Activated naive CD8-positive, alpha-beta T cell treated with anti-CD3 and anti-CD28 coated beads, Interleukin-2, amount 10 ng/mL, durations not matched to agents 7 days and 5 days (primary cell): ENCODE measurements at regions of chr14 and their contacts with region 1.

Region 1: GRCh38 chr14:63863004-63863403 is 10.2 kb downstream of the SYNE2 start:
- DNase-seq: no peak
- ATAC-seq: no peak
- H3K4me3 Mint-ChIP-seq: peak overlapping the region; percentile 58
- H3K27ac Mint-ChIP-seq: peak overlapping the region; percentile 69
- H3K4me1 Mint-ChIP-seq: peaks cover 57% of the 10 kb centered on the region
- H3K27me3 Mint-ChIP-seq: no peaks in the 10 kb centered on the region

Region 2: DNA sequence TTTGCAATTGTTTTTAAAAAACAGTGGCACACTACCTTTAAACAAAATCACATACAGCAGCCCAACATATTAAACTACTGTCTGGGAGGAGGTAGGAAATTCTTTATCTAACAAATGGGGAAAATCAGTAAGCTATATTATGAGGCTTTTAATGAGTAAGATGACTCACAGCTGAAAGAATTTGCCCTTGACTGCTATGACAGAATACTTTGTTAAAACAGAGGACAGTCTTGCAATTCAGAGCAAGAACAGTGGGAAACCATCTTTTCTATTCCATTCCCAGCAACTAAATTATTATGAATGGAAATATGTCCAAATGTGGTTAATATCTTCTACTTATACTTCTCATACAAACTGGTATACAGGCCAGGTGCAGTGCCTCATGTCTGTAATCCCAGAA is 86.0 kb before region 1 on chr14:
- POLR2A ChIA-PET with region 1: no interaction called
- DNase-seq: no peak
- ATAC-seq: no peak
- H3K4me3 Mint-ChIP-seq: no peak overlapping the region
- H3K27ac Mint-ChIP-seq: no peak overlapping the region
- H3K4me1 Mint-ChIP-seq: peaks cover 2% of the 10 kb centered on the region
- H3K27me3 Mint-ChIP-seq: peaks cover 2% of the 10 kb centered on the region

Region 3: GRCh38 chr14:63840981-63841380 is 22.0 kb before region 1 on chr14:
- POLR2A ChIA-PET with region 1: no interaction called
- DNase-seq: peak; percentile 60
- ATAC-seq: peak; percentile 52
- H3K4me3 Mint-ChIP-seq: no peak overlapping the region
- H3K27ac Mint-ChIP-seq: no peak overlapping the region
- H3K4me1 Mint-ChIP-seq: peaks cover 6% of the 10 kb centered on the region
- H3K27me3 Mint-ChIP-seq: peaks cover 3% of the 10 kb centered on the region

Region 4: GRCh38 chr14:63938198-63939005 is 75.4 kb after region 1 on chr14:
- POLR2A ChIA-PET with region 1: interaction called, 12 read pairs
- DNase-seq: peak; percentile 54
- ATAC-seq: peak; percentile 63
- H3K4me3 Mint-ChIP-seq: no peak overlapping the region
- H3K27ac Mint-ChIP-seq: no peak overlapping the region
- H3K4me1 Mint-ChIP-seq: peaks cover 44% of the 10 kb centered on the region
- H3K27me3 Mint-ChIP-seq: no peaks in the 10 kb centered on the region